ENCODE measurements at regions of chr12 and their contacts with region 1.

Region 1: GRCh38 chr12:132018193-132018916 is 68.6 kb downstream of the EP400 start:
- DNase-seq: no peak
- ATAC-seq: 0 out of 2 replicates have a peak, but pooled peaks have one; percentile 14
- H3K4me3 ChIP-seq: no peak overlapping the region
- H3K27ac ChIP-seq: no peak overlapping the region
- H3K4me1 ChIP-seq: no peaks in the 10 kb centered on the region
- H3K27me3 ChIP-seq: no peaks in the 10 kb centered on the region
- CTCF ChIP-seq: no peak

Region 2: GRCh38 chr12:132078190-132078589 is 59.8 kb after region 1 on chr12:
- CTCF ChIA-PET with region 1: interaction called, 10 read pairs
- POLR2A ChIA-PET with region 1: no interaction called
- intact Hi-C with region 1: no loop called
- DNase-seq: peak; percentile 73
- ATAC-seq: peak; percentile 83
- H3K4me3 ChIP-seq: no peak overlapping the region
- H3K27ac ChIP-seq: no peak overlapping the region
- H3K4me1 ChIP-seq: peaks cover 8% of the 10 kb centered on the region; the same call in 1 of the 2 replicates
- H3K27me3 ChIP-seq: no peaks in the 10 kb centered on the region
- CTCF ChIP-seq: no peak

Region 3: GRCh38 chr12:132828706-132829534 is 810.6 kb after region 1 on chr12 and contains the start of gene GOLGA3:
- CTCF ChIA-PET with region 1: no interaction called
- POLR2A ChIA-PET with region 1: interaction called, 10 read pairs
- intact Hi-C with region 1: no loop called
- DNase-seq: peak; percentile 95
- ATAC-seq: peak; percentile 86
- H3K4me3 ChIP-seq: peak within 1 kb of the TSS; percentile 100
- H3K27ac ChIP-seq: peak within 1 kb of the TSS; percentile 91
- H3K4me1 ChIP-seq: peaks cover 26% of the 10 kb centered on the region
- H3K27me3 ChIP-seq: no peaks in the 10 kb centered on the region
- CTCF ChIP-seq: no peak
- total RNA-seq, gene GOLGA3: 86.9 and 130 TPM in 2 replicates